BJ (cell line): ENCODE measurements at regions of chr1 and their contacts with region 1.

Region 1: GRCh38 chr1:241985787-241986186 is 13.1 kb downstream of the MAP1LC3C start:
- DNase-seq: no peak
- H3K4me3 ChIP-seq: no peak overlapping the region
- H3K27me3 ChIP-seq: no peaks in the 10 kb centered on the region
- CTCF ChIP-seq: peak; percentile 68

Region 2: DNA sequence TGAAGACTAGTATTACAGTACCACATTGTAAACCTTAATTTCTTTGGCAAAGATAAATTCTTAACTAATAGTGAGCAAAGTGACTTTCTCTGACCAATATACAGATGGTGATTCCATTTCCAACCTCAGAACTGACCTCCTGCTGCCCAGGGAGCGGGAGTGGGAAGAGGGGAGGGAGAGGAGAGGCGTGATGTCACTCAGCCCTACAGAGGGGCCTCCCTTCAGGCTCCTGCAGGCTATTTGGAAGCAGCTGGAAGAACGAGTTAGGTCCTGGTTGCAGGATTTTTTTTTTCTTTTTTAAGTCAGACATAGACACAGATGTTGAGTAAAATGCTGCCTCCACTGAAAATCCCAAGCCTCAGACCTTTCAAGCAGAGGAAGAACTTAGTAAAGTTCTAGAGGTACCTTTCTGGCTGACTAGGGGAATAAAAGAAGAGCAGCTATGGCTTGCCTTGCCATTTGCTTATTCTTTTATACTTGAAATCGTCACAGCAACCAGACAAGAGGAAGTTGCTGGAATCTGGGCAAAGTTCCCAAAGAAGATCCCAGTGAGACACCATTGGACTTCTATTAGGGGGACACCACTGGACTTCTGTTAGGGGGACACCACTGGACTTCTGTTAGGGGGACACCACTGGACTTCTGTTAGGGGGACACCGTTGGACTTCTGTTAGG is 83.3 kb before region 1 on chr1:
- CTCF ChIA-PET with region 1: interaction called, 45 read pairs
- POLR2A ChIA-PET with region 1: no interaction called
- DNase-seq: peak; percentile 21
- H3K4me3 ChIP-seq: no peak overlapping the region
- H3K27me3 ChIP-seq: no peaks in the 10 kb centered on the region; the same call in 1 of the 2 replicates
- CTCF ChIP-seq: no peak

Region 3: GRCh38 chr1:241972703-241973369 is 13.0 kb before region 1 on chr1:
- CTCF ChIA-PET with region 1: interaction called, 15 read pairs
- POLR2A ChIA-PET with region 1: no interaction called
- DNase-seq: peak; percentile 15
- H3K4me3 ChIP-seq: no peak overlapping the region
- H3K27me3 ChIP-seq: no peaks in the 10 kb centered on the region
- CTCF ChIP-seq: no peak